Heart right ventricle (tissue), 16 donors: ENCODE measurements at regions of chr16 and their contacts with region 1.

Region 1: DNA sequence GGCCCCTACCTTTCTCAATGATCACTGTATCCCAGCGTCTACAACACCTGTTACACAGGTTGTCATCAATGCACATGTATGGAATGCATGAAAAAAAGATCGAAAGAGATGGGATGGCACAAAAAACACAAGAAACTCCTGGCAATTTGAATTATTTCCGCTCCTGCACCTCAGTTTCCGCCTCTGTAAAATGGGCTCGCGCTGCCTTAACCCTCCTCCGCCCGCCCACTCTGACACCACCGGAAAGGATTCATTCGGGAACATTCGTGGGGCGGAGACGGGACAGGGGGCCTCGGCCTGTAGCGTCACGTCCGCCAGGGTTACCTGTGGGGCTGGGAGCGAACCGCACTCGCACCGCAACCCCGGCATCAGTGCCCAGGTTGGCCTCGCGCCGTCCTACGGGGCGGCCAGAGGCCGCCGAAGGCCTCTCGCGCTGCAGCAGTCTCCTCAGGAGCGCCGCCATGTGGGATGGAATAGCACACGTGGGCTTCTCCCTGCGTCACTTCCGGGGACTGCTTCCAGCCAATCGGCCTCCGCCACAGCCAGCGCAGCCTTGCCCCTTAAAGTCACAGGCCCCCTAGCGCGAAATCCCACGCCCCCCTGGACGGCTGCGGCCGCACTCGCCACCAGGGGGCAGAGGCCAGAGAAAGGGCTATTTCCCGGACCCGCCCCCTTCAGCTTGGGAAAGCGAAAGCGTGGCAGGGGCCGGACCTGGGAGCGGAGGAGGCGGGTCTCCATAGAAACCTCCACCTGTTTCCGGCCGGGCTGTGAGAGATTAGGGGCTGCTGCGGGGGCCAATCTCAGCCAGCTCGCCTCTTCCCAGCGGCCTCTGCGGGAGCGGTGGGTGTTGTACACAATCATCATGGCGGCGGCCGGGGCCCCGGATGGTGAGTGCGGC is at the starts of genes EARS2 and UBFD1:
- DNase-seq: peak; percentile 98
- ATAC-seq: peak; percentile 96 to 98 (median 98)
- H3K4me3 ChIP-seq: peak within 1 kb of the TSS; percentile 82 to 99 (median 93)
- H3K27ac ChIP-seq: peak within 1 kb of the TSS; percentile 79 to 97 (median 93)
- H3K4me1 ChIP-seq: peaks cover 10 to 45% (median 40%) of the 10 kb centered on the region in 9 donors
- H3K27me3 ChIP-seq: no peaks in the 10 kb centered on the region
- CTCF ChIP-seq: peak; percentile 88 to 99 (median 97)
- total RNA-seq, gene EARS2: 13.7 to 28.7 (median 21.6) TPM
- total RNA-seq, gene UBFD1: 40.1 to 77.3 (median 50.7) TPM

Region 2: DNA sequence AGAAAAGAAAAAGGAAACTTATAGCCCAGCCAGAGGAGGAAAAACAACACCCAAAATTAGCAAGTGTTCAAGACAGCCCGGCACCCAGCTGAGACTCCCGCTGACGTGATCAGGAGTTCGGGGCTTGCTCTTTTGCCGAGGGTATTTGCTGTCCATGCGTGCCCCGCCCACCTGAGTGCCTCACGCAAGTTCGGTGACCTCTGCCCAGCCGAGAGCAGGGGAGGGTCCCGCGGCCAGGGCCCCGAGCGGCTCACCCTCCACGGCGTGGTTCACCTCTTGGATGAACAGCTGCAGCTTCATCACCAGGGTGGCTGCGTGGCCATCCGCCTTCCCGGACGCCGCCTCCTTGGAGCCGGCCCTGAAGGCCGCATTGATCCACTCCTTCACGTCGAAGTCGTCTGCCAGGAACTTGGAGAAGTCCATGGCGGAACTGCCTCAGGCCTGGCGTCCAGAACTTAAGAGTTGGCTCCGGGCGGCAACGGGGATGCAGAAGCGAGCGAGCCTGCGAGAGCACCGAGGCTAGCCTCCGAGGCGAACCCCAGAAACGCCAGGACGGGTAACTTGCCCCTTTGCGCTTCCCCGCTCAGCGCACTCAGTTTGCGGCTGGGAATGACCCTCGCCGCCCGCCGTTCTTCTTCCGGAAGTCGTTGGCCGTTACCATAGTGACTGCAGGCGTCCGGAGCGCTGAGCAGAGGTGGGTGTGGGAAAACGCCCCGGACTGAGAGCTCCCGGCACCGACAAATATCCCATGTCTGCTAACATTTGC is 104.4 kb before region 1 on chr16 and contains the start of gene COG7:
- intact Hi-C with region 1: no loop called
- DNase-seq: peak; percentile 89 to 92
- ATAC-seq: peak; percentile 94 to 98 (median 96)
- H3K4me3 ChIP-seq: peak within 1 kb of the TSS; percentile 77 to 100 (median 84)
- H3K27ac ChIP-seq: peak within 1 kb of the TSS; percentile 55 to 93 (median 88)
- H3K4me1 ChIP-seq: peaks cover 0 to 43% (median 19%) of the 10 kb centered on the region in 9 donors
- H3K27me3 ChIP-seq: no peaks in the 10 kb centered on the region
- CTCF ChIP-seq: no peak
- total RNA-seq, gene COG7: 10.9 to 15.5 (median 12.9) TPM

Region 3: DNA sequence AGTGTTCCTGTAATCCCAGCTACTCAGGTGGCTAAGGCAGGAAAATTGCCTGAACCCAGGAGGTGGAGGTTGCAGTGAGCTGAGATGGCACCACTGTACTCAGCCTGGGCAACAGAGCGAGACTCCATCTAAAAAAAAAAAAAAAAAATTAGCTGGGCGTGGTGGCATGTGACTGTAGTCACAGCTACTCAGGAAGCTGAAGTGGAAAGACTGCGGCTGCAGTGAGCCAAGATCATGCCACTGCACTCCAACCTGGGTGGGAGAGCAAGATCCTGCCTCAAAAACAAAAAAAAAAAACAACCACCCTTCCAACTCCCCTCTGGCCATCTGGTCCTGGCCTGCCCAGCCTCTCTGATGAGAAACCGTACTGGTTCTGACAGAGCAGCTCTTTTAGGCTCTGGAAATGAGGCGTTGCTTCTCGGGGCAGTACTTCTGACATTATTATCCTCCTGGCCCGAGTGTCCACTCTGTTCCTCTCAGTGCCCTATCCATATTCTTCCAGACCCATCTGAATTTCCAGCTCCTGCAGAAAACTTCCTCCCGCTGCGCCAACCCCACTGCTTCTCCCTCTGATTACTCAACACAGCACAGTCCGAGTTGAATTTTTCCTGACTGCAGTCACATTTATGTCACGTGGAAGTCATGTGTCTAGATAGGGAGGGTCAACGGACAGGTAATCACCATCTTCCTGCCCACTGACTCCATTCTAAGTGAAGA is 60.1 kb before region 1 on chr16:
- intact Hi-C with region 1: loop called in 1 of 10 experiments (anchors 5 kb)
- DNase-seq: no peak
- ATAC-seq: peak in 6 of 8 donors; percentile 38 to 57 (median 44)
- H3K4me3 ChIP-seq: no peak overlapping the region
- H3K27ac ChIP-seq: peak overlapping the region in 6 of 10 donors; percentile 0 to 68 (median 54)
- H3K4me1 ChIP-seq: peaks cover 2 to 61% (median 32%) of the 10 kb centered on the region in 9 donors
- H3K27me3 ChIP-seq: no peaks in the 10 kb centered on the region
- CTCF ChIP-seq: no peak

Region 4: GRCh38 chr16:23510164-23510914 is 46.8 kb before region 1 on chr16 and contains the start of gene GGA2:
- intact Hi-C with region 1: loop called in 2 of 10 experiments (anchors 2 kb)
- DNase-seq: peak; percentile 80 to 86
- ATAC-seq: peak; percentile 92 to 97 (median 94)
- H3K4me3 ChIP-seq: peak within 1 kb of the TSS; percentile 66 to 92 (median 85)
- H3K27ac ChIP-seq: peak within 1 kb of the TSS; percentile 28 to 94 (median 86)
- H3K4me1 ChIP-seq: peaks cover 5 to 41% (median 27%) of the 10 kb centered on the region in 9 donors
- H3K27me3 ChIP-seq: no peaks in the 10 kb centered on the region
- CTCF ChIP-seq: peak in 4 of 9 donors; percentile 8 to 32 (median 26)
- total RNA-seq, gene GGA2: 32.6 to 52.9 (median 40.6) TPM

Region 5: GRCh38 chr16:23520500-23520899 is 36.6 kb before region 1 on chr16:
- intact Hi-C with region 1: no loop called
- DNase-seq: no peak
- ATAC-seq: no peak
- H3K4me3 ChIP-seq: no peak overlapping the region
- H3K27ac ChIP-seq: peak overlapping the region in 1 of 10 donors; percentile 82
- H3K4me1 ChIP-seq: peaks cover 0 to 41% (median 0%) of the 10 kb centered on the region in 9 donors
- H3K27me3 ChIP-seq: no peaks in the 10 kb centered on the region
- CTCF ChIP-seq: no peak

Region 6: DNA sequence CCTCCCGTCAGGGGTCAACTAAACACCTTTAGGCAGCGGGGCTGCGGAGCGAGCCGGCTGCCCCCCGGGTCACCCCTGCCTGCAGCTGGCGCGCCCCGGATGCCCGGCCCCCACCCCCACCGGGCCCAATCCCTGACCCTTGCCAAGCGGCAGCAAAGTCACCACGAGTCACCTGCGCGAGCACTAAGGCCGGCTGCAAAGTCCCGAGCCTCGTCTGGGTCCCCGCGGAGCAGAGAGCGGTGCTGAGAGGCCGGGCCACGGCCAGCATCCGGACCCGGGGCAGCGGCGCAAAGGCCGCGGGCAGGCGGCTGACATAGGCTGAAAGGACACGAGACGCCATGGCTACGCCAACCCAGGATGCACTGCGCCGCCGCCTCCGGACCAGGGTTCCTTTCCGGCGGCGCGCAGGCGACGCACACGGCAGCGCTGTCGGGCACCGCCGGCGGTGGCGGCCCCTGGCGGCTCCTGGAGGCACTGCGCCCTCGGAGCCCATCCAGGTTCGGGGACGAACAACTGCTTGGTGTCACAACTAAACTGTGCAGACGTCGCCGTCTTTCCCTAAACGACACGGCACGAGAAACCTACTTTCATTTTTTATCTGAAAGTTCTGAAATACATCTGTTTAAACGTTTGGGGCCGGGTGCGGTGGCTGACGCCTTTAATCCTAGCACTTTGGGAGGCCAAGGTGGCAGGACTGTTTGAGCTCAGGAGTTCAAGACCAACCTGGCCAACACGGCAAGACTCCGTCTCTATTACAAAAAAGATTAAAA is 39.0 kb after region 1 on chr16 and contains the start of gene NDUFAB1:
- intact Hi-C with region 1: loop called in 6 of 10 experiments (anchors 1 to 5 kb)
- DNase-seq: peak; percentile 89 to 93
- ATAC-seq: peak; percentile 95 to 99 (median 98)
- H3K4me3 ChIP-seq: peak within 1 kb of the TSS; percentile 55 to 100 (median 96)
- H3K27ac ChIP-seq: peak within 1 kb of the TSS; percentile 78 to 96 (median 94)
- H3K4me1 ChIP-seq: peaks cover 7 to 46% (median 27%) of the 10 kb centered on the region in 9 donors
- H3K27me3 ChIP-seq: no peaks in the 10 kb centered on the region
- CTCF ChIP-seq: peak; percentile 99 to 100 (median 100)
- total RNA-seq, gene NDUFAB1: 338 to 592 (median 433) TPM